ENCODE measurements at regions of chr2 and their contacts with region 1.

Region 1: DNA sequence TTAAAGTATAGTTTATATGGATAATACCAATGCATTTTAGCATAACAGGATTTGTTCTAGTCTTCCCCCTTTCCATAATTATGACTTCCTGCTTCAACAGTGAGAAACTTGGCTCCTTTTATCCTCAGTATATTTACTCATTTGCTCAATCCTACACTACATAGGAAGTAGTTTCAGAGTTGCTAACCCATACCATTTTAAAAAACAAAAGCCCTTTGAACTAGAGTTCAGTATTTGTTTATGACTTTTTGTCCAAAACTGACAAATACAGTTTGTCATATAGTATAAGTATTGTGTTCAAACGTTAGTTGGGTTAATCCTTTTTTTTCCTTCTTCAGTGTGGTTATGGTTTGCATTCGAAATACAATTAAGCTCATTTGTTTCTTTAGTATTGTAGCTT is 5.9 kb upstream of the DNAJC27 start:
- DNase-seq: no peak
- ATAC-seq: no peak
- H3K4me3 ChIP-seq: no peak overlapping the region
- H3K27ac ChIP-seq: no peak overlapping the region
- H3K4me1 ChIP-seq: peaks cover 5 to 7% of the 10 kb centered on the region in 2 donors
- H3K27me3 ChIP-seq: no peaks in the 10 kb centered on the region
- CTCF ChIP-seq: no peak

Region 2: GRCh38 chr2:25032094-25032493 is 54.5 kb after region 1 on chr2:
- intact Hi-C with region 1: no loop called
- DNase-seq: no peak
- ATAC-seq: no peak
- H3K4me3 ChIP-seq: no peak overlapping the region
- H3K27ac ChIP-seq: no peak overlapping the region
- H3K4me1 ChIP-seq: no peaks in the 10 kb centered on the region
- H3K27me3 ChIP-seq: no peaks in the 10 kb centered on the region
- CTCF ChIP-seq: no peak

Region 3: GRCh38 chr2:25127646-25128045 is 150.0 kb after region 1 on chr2:
- intact Hi-C with region 1: loop called in 1 of 2 experiments (anchors 5 kb)
- DNase-seq: peak in 1 of 4 donors; percentile 40
- ATAC-seq: no peak
- H3K4me3 ChIP-seq: no peak overlapping the region
- H3K27ac ChIP-seq: no peak overlapping the region
- H3K4me1 ChIP-seq: peaks cover 0 to 11% of the 10 kb centered on the region in 2 donors
- H3K27me3 ChIP-seq: peaks cover 0 to 33% of the 10 kb centered on the region in 2 donors
- CTCF ChIP-seq: no peak

Measured in left lung (tissue), 14 donors.